Activated CD4-positive, alpha-beta memory T cell treated with anti-CD3 and anti-CD28 coated beads for 36 hours (primary cell): ENCODE measurements at regions of chr5 and their contacts with region 1.

Region 1: DNA sequence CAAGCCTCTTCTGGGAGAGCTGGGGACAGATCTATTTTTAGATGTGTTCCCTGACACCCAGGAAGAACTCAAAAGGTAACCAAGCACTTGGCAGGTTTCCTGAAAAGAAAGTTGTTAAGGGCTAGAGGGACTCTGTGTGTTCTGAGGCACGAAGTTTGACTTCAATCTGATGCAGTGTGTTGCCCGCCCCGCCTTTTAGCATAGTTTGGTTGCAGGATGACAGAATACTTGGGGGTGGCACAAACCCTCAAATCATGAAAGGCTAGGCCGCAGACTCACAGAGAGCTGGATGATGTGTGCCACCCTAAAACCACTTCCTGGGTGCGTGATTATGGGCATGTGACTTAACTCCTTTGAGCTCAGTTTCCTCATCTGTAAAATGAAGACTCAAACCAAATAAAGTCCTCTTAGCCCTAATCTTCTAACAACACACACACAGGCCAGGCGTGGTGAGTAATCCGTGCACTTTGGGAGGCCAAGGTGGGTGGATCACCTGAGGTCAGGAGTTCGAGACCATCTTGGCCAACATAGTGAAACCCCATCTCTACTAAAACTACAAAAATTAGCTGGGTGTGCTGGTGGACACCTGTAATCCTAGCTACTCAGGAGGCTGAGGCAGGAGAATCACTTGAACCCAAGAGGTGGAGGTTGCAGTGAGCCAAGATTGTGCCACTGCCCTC is 12.8 kb upstream of the NDFIP1 start:
- DNase-seq: peak; percentile 93
- H3K4me3 Mint-ChIP-seq: peak overlapping the region; percentile 48
- H3K27ac Mint-ChIP-seq: peak overlapping the region; percentile 95
- H3K4me1 Mint-ChIP-seq: peaks cover 63% of the 10 kb centered on the region
- H3K27me3 Mint-ChIP-seq: no peaks in the 10 kb centered on the region

Region 2: GRCh38 chr5:142006363-142007236 is 89.2 kb before region 1 on chr5:
- CTCF ChIA-PET with region 1: interaction called, 8 read pairs
- POLR2A ChIA-PET with region 1: interaction called, 50 read pairs
- intact Hi-C with region 1: loop called (anchors 2 kb)
- DNase-seq: peak; percentile 58
- H3K4me3 Mint-ChIP-seq: peak overlapping the region; percentile 36
- H3K27ac Mint-ChIP-seq: peak overlapping the region; percentile 96
- H3K4me1 Mint-ChIP-seq: peaks cover 45% of the 10 kb centered on the region
- H3K27me3 Mint-ChIP-seq: no peaks in the 10 kb centered on the region

Region 3: DNA sequence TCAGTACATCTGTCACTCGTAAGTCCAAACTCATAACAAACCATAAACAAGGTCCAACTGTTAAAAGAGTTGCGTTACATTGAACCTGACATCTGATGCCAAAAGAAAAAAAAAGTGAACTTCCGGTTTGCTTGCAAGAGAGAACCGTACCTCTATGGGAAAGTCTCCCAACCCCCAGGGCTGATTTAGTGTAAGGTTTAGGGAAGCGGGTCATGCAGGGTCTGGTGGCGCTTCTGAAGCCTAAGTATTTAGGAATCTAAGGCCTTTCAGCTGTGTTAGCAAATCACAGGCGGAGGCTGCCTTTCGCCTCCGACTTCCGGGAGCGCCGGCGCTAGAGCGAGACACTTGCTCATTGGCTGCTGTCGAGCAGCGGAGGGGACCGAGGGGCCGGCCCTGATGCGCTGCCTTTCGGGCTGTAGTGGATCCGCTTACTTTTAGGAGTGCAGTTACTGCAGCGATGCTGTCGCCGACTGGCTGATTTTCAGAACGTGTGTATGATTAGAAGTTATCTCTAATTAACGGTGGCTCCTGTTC is 71.0 kb before region 1 on chr5:
- CTCF ChIA-PET with region 1: no interaction called
- POLR2A ChIA-PET with region 1: interaction called, 6 read pairs
- intact Hi-C with region 1: loop called (anchors 2 kb)
- DNase-seq: peak; percentile 93
- H3K4me3 Mint-ChIP-seq: peak overlapping the region; percentile 88
- H3K27ac Mint-ChIP-seq: peak overlapping the region; percentile 99
- H3K4me1 Mint-ChIP-seq: peaks cover 17% of the 10 kb centered on the region
- H3K27me3 Mint-ChIP-seq: no peaks in the 10 kb centered on the region

Region 4: GRCh38 chr5:142073362-142073988 is 22.3 kb before region 1 on chr5:
- CTCF ChIA-PET with region 1: no interaction called
- POLR2A ChIA-PET with region 1: no interaction called
- intact Hi-C with region 1: loop called (anchors 2 kb)
- DNase-seq: no peak
- H3K4me3 Mint-ChIP-seq: no peak overlapping the region
- H3K27ac Mint-ChIP-seq: peak overlapping the region; percentile 56
- H3K4me1 Mint-ChIP-seq: peaks cover 30% of the 10 kb centered on the region
- H3K27me3 Mint-ChIP-seq: no peaks in the 10 kb centered on the region